HepG2 (cell line): ENCODE measurements at regions of chr6 and their contacts with region 1.

Region 1: DNA sequence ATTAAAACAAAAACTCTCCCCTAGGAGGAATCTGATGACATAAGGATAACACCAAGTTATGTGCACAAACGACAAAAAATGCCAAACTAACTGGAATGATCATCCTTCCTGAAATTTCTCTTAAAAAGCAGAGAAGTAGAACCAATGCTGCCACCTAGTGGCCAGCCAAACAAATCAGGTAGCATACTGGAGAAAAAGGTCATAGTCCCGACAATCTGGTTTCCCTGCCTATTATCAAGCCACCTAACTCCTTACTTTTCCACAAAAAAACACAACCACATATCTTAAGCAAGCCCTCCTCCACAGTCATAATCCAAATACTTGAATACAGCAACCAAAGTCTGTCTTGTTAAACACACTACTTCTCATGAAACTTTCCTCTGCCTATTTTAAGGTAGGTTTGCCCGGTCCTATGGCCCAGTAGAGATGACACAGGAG is 5.3 kb downstream of the OARD1 start:
- DNase-seq: peak; percentile 88
- ATAC-seq: no peak
- H3K4me3 ChIP-seq: no peak overlapping the region
- H3K27ac ChIP-seq: no peak overlapping the region
- H3K4me1 ChIP-seq: peaks cover 65% of the 10 kb centered on the region
- H3K27me3 ChIP-seq: no peaks in the 10 kb centered on the region; a peak in 1 of 5 replicates
- CTCF ChIP-seq: peak; percentile 90
- EP300 ChIP-seq: no peak
- POLR2A ChIP-seq: no peak
- RAD21 ChIP-seq: peak; percentile 78

Region 2: DNA sequence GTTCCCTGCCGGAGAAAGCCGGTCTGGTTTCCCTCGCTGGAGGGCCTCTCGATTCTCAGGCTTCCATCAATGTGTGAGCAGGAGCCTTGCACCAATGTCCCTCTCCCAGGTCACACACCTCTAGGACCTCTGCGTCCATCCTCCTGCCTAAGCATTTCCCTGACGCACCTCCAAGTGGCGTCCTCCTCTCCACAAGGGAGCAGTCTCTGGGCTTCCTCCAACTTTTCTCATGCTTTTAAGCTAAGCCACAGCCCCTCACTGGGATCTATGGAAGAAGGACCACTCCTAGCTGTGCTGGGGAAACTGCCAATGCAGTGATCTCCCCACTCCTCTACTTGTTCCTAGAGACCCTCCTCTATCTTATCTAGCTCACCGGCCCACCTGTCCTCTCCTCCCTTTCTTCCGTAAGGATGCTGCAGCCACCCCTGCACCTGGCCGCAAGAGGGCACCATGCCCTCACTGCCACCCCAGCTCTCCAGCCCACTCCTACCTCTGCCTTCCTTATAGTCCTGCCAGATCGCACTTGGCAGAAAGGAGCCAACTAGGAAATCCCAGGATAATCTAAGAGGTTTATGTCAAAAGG is 738.4 kb before region 1 on chr6:
- CTCF ChIA-PET with region 1: no interaction called
- POLR2A ChIA-PET with region 1: no interaction called
- in situ Hi-C with region 1: no loop called
- intact Hi-C with region 1: loop called (anchors 10 kb)
- DNase-seq: no peak
- ATAC-seq: peak; percentile 87
- H3K4me3 ChIP-seq: no peak overlapping the region
- H3K27ac ChIP-seq: no peak overlapping the region
- H3K4me1 ChIP-seq: no peaks in the 10 kb centered on the region
- H3K27me3 ChIP-seq: peaks cover under 1 to 3% of the 10 kb centered on the region in 2 experiments; a peak in 1 of 5 replicates
- CTCF ChIP-seq: peak; percentile 90
- EP300 ChIP-seq: no peak
- POLR2A ChIP-seq: no peak
- RAD21 ChIP-seq: peak; percentile 59

Region 3: GRCh38 chr6:40894962-40895799 is 171.7 kb before region 1 on chr6:
- CTCF ChIA-PET with region 1: no interaction called
- POLR2A ChIA-PET with region 1: interaction called, 4 read pairs
- in situ Hi-C with region 1: no loop called
- intact Hi-C with region 1: loop called (anchors 1 kb)
- DNase-seq: peak; percentile 43
- ATAC-seq: peak; percentile 36
- H3K4me3 ChIP-seq: no peak overlapping the region
- H3K27ac ChIP-seq: no peak overlapping the region
- H3K4me1 ChIP-seq: peaks cover 89% of the 10 kb centered on the region
- H3K27me3 ChIP-seq: peaks cover 2 to 12% of the 10 kb centered on the region in 2 experiments; a peak in 2 of 5 replicates
- CTCF ChIP-seq: peak; percentile 84
- EP300 ChIP-seq: 0 out of 4 replicates have a peak, but pooled peaks of 1 of the 2 experiments have one; percentile 7
- POLR2A ChIP-seq: no peak
- RAD21 ChIP-seq: peak; percentile 75

Region 4: GRCh38 chr6:41008011-41008410 is 58.9 kb before region 1 on chr6:
- CTCF ChIA-PET with region 1: interaction called, 41 read pairs
- POLR2A ChIA-PET with region 1: interaction called, 4 read pairs
- in situ Hi-C with region 1: no loop called
- intact Hi-C with region 1: loop called (anchors 1 kb)
- DNase-seq: no peak
- ATAC-seq: peak; percentile 21
- H3K4me3 ChIP-seq: no peak overlapping the region
- H3K27ac ChIP-seq: no peak overlapping the region
- H3K4me1 ChIP-seq: peaks cover 46% of the 10 kb centered on the region
- H3K27me3 ChIP-seq: no peaks in the 10 kb centered on the region; a peak in 1 of 5 replicates
- CTCF ChIP-seq: no peak
- EP300 ChIP-seq: no peak
- POLR2A ChIP-seq: no peak
- RAD21 ChIP-seq: no peak

Region 5: GRCh38 chr6:41039060-41039998 is 27.6 kb before region 1 on chr6 and contains the start of gene UNC5CL:
- CTCF ChIA-PET with region 1: interaction called, 25 read pairs
- POLR2A ChIA-PET with region 1: interaction called, 46 read pairs
- in situ Hi-C with region 1: loop called (anchors 5 kb)
- intact Hi-C with region 1: loop called (anchors 1 kb)
- DNase-seq: peak; percentile 45
- ATAC-seq: peak; percentile 30
- H3K4me3 ChIP-seq: peak within 1 kb of the TSS in 2 of 3 experiments; percentile 33 to 64; a peak in 2 of 6 replicates
- H3K27ac ChIP-seq: peak within 1 kb of the TSS; percentile 94
- H3K4me1 ChIP-seq: peaks cover 78% of the 10 kb centered on the region
- H3K27me3 ChIP-seq: no peaks in the 10 kb centered on the region
- CTCF ChIP-seq: peak; percentile 79
- EP300 ChIP-seq: no peak
- POLR2A ChIP-seq: no peak
- RAD21 ChIP-seq: peak; percentile 35; the same call in 1 of the 2 replicates
- total RNA-seq, gene UNC5CL: 0.87 and 2.4 TPM in 2 replicates